ENCODE measurements at regions of chr11 and their contacts with region 1.

Region 1: GRCh38 chr11:63567044-63567840 is 4.1 kb upstream of the PLAAT2 start:
- DNase-seq: no peak
- ATAC-seq: peak; percentile 89

Region 2: DNA sequence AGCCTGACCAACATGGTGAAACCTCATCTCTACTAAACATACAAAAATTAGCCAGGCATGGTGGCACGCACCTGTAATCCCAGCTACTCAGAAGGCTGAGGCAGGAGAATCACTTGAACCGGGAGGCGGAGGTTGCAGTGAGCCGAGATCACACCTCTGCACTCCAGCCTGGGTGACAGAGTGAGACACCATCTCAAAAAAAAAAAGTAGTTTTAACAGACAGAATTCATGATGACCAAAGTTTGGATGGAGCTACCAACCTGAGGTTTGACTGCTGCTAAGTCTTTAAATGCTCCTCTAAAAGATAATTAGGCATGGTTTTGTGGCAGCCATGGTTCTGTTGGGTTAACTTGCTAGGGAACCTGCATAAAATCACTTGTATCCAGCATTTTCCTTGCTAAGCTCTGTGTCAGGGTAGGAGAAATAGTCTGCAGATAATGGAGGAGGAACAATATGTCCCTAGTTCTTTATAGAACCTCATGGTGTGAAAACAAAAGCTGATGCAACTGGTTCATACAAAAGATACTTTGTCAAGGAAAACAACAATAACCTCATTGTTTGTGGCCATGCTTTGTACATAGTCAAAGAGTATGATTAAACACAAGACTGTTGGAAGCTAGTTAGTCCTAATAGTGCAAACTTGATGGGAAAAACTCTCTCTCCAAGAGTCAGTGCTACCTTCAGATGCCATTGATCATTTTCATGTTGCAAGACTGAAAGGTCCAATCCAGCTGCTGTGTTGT is 15.9 kb after region 1 on chr11:
- intact Hi-C with region 1: loop called (anchors 1 kb)
- DNase-seq: no peak
- ATAC-seq: peak; percentile 92

Measured in sciatic nerve (tissue), 2 donors.